MCF 10A (cell line): ENCODE measurements at regions of chr5 and their contacts with region 1.

Region 1: DNA sequence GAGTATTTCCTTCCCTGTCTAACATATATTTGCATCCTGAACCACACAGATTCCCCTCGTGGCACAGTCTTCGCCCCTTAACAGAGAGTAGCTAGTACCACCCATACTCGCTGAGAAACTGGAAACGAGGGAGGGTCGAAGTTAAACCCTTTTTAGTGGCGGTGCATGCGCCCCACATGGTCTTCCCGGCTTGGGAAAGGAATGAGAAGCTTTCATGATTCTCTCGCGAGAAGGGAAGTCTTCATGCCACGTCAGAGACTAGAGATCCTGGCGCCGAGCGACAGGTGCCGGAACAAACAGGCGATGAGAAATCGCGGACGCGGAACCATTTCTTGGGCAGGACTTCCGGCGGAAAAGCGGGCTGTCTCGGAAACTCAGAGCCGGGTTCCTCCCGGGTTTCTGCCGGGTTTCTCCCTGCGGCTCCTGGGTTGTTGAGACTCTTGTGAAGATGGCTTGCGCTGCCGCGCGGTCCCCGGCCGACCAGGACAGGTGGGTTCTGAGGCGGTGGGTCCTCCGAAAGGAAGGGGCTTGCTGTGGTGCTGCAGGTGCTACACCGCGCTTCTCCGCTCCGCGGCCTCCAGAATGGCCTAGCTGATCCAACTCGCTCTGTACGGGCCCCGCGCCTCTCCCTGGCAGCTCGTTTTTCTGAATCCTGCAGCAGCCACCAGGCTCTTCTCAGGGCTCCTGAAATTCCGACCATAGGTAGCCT is at the start of gene SRP19:
- DNase-seq: peak; percentile 98
- H3K4me3 Mint-ChIP-seq: peak within 1 kb of the TSS; percentile 88
- H3K27ac Mint-ChIP-seq: peak within 1 kb of the TSS; percentile 94
- H3K4me1 Mint-ChIP-seq: peaks cover 13% of the 10 kb centered on the region
- H3K27me3 Mint-ChIP-seq: peaks cover 24% of the 10 kb centered on the region
- CTCF ChIP-seq: no peak
- total RNA-seq, gene SRP19: 88.9 and 99.6 TPM in 2 replicates

Region 2: GRCh38 chr5:112737463-112738190 is 123.5 kb before region 1 on chr5 and contains the start of gene APC:
- CTCF ChIA-PET with region 1: no interaction called
- POLR2A ChIA-PET with region 1: interaction called, 10 read pairs
- intact Hi-C with region 1: no loop called
- DNase-seq: peak; percentile 91
- H3K4me3 Mint-ChIP-seq: peak within 1 kb of the TSS; percentile 92
- H3K27ac Mint-ChIP-seq: peak within 1 kb of the TSS; percentile 92
- H3K4me1 Mint-ChIP-seq: peaks cover 6% of the 10 kb centered on the region
- H3K27me3 Mint-ChIP-seq: no peaks in the 10 kb centered on the region
- CTCF ChIP-seq: no peak
- total RNA-seq, gene APC: 24.9 and 31.8 TPM in 2 replicates

Region 3: GRCh38 chr5:112848116-112848811 is 12.8 kb before region 1 on chr5:
- CTCF ChIA-PET with region 1: interaction called, 21 read pairs
- POLR2A ChIA-PET with region 1: interaction called, 17 read pairs
- intact Hi-C with region 1: no loop called
- DNase-seq: peak; percentile 80
- H3K4me3 Mint-ChIP-seq: no peak overlapping the region
- H3K27ac Mint-ChIP-seq: no peak overlapping the region
- H3K4me1 Mint-ChIP-seq: no peaks in the 10 kb centered on the region
- H3K27me3 Mint-ChIP-seq: no peaks in the 10 kb centered on the region
- CTCF ChIP-seq: peak; percentile 37

Region 4: DNA sequence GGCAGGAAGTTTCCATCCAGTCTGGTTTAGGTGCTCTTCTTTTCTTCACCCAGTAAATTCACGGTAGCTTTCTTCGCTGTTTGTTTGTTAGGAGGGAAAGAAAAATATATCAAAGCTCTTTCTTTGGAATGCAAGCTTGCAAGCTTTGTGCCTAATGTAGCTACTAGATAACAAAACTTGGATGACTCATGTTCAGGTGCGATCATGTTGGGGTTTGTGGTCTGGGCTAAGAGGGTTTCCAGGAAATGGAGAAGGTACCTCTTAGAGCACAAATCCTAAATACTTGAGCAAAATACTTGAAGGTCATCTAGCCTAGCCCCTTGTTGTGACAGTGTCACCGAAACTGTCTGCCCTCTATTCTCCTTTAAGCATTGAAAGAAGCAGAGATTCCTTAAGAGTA is 17.7 kb after region 1 on chr5:
- CTCF ChIA-PET with region 1: interaction called, 3 read pairs
- POLR2A ChIA-PET with region 1: interaction called, 21 read pairs
- intact Hi-C with region 1: no loop called
- DNase-seq: peak; percentile 56
- H3K4me3 Mint-ChIP-seq: peak overlapping the region; percentile 40
- H3K27ac Mint-ChIP-seq: peak overlapping the region; percentile 71
- H3K4me1 Mint-ChIP-seq: peaks cover 20% of the 10 kb centered on the region
- H3K27me3 Mint-ChIP-seq: no peaks in the 10 kb centered on the region
- CTCF ChIP-seq: no peak

Region 5: GRCh38 chr5:112958093-112959088 is 97.3 kb after region 1 on chr5:
- CTCF ChIA-PET with region 1: no interaction called
- POLR2A ChIA-PET with region 1: interaction called, 4 read pairs
- intact Hi-C with region 1: loop called (anchors 5 kb)
- DNase-seq: peak; percentile 98
- H3K4me3 Mint-ChIP-seq: no peak overlapping the region
- H3K27ac Mint-ChIP-seq: no peak overlapping the region
- H3K4me1 Mint-ChIP-seq: peaks cover 36% of the 10 kb centered on the region
- H3K27me3 Mint-ChIP-seq: no peaks in the 10 kb centered on the region
- CTCF ChIP-seq: no peak

Region 6: GRCh38 chr5:112976432-112977309 is 115.6 kb after region 1 on chr5 and contains the start of gene DCP2:
- CTCF ChIA-PET with region 1: no interaction called
- POLR2A ChIA-PET with region 1: interaction called, 10 read pairs
- intact Hi-C with region 1: loop called (anchors 5 kb)
- DNase-seq: peak; percentile 99
- H3K4me3 Mint-ChIP-seq: peak within 1 kb of the TSS; percentile 97
- H3K27ac Mint-ChIP-seq: peak within 1 kb of the TSS; percentile 98
- H3K4me1 Mint-ChIP-seq: peaks cover 15% of the 10 kb centered on the region
- H3K27me3 Mint-ChIP-seq: no peaks in the 10 kb centered on the region
- CTCF ChIP-seq: no peak
- total RNA-seq, gene DCP2: 32.7 and 34.1 TPM in 2 replicates